Activated CD8-positive, alpha-beta T cell treated with anti-CD3 and anti-CD28 coated beads for 36 hours (primary cell): ENCODE measurements at regions of chr9 and their contacts with region 1.

Region 1: DNA sequence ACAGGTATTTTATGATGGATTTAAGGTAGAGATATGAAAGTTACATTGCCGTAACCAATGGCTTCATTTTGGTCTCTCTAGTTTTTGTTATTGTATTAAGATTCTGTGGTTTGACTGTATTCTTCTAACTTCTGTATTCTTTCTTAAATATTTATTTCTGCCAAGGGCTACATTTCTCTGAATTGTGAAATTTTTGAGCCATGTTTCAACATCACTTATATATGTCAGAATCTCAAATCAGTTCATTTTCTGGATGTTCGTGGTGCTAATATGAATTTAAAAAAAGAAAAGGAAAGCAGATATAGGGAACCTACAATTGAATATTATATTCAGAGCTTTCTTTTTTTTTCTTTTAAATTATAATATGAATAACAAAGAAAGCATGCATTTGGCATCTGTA is 142.7 kb downstream of the ANXA1 start:
- DNase-seq: no peak
- ATAC-seq: no peak
- H3K4me3 Mint-ChIP-seq: no peak overlapping the region
- H3K27ac Mint-ChIP-seq: no peak overlapping the region
- H3K4me1 Mint-ChIP-seq: no peaks in the 10 kb centered on the region
- H3K27me3 Mint-ChIP-seq: no peaks in the 10 kb centered on the region
- CTCF ChIP-seq: no peak

Region 2: DNA sequence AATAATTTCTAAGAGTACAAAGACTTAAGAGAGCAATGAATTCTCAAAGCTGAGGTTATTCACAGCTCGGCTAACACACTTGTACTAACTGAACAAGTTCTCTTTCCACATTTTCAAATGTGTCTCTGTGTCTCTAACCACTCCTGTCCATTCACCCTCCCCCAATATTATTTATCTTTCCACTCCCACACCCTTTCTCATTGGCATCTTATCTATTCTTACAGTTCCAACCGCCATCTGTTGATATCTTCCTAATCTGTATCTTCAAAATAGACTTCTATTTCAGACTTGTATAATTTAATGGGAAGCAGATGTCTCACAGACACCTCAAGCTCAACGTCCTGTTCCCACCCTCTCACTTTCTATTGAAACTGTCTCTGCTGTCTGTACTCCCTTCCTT is 63.3 kb after region 1 on chr9:
- CTCF ChIA-PET with region 1: no interaction called
- POLR2A ChIA-PET with region 1: no interaction called
- intact Hi-C with region 1: loop called (anchors 10 kb)
- DNase-seq: no peak
- ATAC-seq: no peak
- H3K4me3 Mint-ChIP-seq: no peak overlapping the region
- H3K27ac Mint-ChIP-seq: no peak overlapping the region
- H3K4me1 Mint-ChIP-seq: no peaks in the 10 kb centered on the region
- H3K27me3 Mint-ChIP-seq: no peaks in the 10 kb centered on the region
- CTCF ChIP-seq: no peak